ENCODE measurements at regions of chr14 and their contacts with region 1.

Region 1: DNA sequence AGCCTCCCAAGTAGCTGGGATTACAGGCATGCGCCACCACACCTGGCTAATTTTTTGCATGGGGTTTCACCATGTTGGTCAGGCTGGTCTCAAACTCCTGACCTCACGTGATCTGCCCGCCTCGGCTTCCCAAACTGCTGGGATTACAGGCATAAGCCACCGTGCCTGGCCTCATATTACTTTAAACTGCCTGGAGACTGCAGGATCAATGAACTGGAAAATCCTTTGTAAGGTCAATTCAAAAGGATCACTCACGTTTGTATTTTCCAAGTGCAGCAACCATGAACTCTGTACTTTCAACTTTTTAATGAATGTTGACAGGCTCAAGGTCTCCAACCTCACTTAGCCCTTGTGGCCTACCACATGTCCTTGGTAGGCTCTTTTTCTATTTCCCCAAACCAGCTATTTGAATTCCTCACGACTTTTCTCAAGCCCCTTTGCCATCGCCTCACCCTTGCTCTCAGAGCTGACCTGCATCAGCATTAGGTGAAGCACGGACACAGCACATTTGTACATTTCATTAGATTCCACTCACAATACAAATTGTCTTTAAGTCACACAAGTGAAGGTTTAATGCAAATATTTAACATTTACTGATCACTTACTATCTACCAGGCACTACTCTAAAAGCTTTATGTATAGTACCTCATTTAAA is 42.2 kb upstream of the GCH1 start:
- DNase-seq: no peak
- H3K4me3 ChIP-seq: no peak overlapping the region
- H3K27ac ChIP-seq: no peak overlapping the region
- H3K4me1 ChIP-seq: no peaks in the 10 kb centered on the region
- H3K27me3 ChIP-seq: no peaks in the 10 kb centered on the region
- CTCF ChIP-seq: no peak

Region 2: DNA sequence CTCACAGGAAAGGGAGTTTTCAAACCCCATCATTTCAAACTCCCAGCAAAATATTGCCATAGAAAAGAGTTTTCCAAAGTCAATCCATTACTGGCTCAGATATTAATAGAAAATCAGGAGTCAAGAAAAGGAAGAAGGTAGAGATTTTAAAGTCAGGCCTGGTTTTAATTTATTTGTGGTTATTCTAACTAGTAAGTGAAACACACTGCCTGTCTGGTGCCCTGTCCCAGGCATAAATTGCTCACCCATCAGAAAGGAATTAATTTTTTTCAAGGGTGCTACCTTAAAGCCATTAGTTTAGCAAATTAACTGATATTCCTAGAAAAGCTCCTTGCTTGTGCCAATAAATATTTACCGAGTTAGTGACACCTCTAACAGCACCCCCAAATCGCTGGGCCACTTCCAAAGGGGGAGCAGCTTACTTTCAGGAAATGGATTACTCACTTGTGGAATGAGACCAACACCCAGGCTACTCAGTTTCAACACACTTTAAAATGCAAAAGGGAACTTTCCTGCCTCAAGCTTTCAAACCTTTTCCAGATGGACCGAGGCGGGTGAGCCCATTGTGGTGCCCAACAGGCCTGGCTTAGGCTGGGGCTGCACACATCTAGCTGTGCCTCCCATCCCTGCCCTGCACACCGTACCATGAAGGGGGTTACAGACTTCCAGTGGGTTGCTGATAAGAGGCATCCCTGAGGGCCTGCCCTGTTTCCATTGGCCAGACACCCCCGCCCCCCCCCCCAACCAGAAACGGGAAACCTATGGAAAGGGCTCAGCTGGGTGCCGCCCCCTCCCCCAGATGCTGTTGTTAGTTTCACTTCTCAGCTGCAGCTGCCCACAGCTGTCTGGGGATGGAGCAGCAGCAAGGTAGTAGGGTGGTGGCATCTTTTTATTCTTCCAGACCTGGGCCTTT is 260.7 kb before region 1 on chr14:
- CTCF ChIA-PET with region 1: interaction called, 11 read pairs
- POLR2A ChIA-PET with region 1: no interaction called
- intact Hi-C with region 1: no loop called
- DNase-seq: peak; percentile 37 to 69
- H3K4me3 ChIP-seq: no peak overlapping the region
- H3K27ac ChIP-seq: peak overlapping the region; percentile 57
- H3K4me1 ChIP-seq: peaks cover 39% of the 10 kb centered on the region
- H3K27me3 ChIP-seq: no peaks in the 10 kb centered on the region
- CTCF ChIP-seq: no peak